AG04449 (cell line): ENCODE measurements at regions of chr1 and their contacts with region 1.

Region 1: GRCh38 chr1:60281360-60281932 is 207.9 kb upstream of the C1orf87 start:
- DNase-seq: no peak
- H3K4me3 ChIP-seq: no peak overlapping the region
- CTCF ChIP-seq: peak; percentile 86

Region 2: DNA sequence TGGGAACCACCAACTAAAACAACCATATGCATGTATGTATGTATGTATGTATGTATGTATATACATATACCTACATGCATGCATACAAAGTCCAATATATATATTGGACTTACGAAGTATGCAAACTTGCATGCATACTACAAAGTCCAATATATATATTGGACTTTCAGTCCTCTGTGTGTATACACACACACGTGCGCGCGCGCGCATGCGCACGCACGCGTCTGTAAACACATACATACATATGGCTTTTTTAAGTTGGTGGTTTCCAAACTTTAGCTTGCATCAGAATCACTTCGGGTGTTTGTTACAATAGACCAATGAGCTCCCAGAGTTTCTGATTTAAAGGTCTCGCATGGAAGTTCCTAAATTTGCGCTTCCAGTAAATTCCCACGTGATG is 10.4 kb before region 1 on chr1:
- CTCF ChIA-PET with region 1: interaction called, 15 read pairs
- POLR2A ChIA-PET with region 1: no interaction called
- DNase-seq: no peak
- H3K4me3 ChIP-seq: no peak overlapping the region
- CTCF ChIP-seq: no peak

Region 3: GRCh38 chr1:60376196-60376848 is 94.9 kb after region 1 on chr1:
- CTCF ChIA-PET with region 1: no interaction called
- POLR2A ChIA-PET with region 1: no interaction called
- DNase-seq: no peak
- H3K4me3 ChIP-seq: no peak overlapping the region
- CTCF ChIP-seq: no peak